Panc1 (cell line): ENCODE measurements at regions of chr1 and their contacts with region 1.

Region 1: GRCh38 chr1:84433258-84434080 is 35.2 kb downstream of the DNASE2B start:
- DNase-seq: peak; percentile 84
- ATAC-seq: peak; percentile 94
- H3K4me3 ChIP-seq: peak overlapping the region; percentile 7 to 37
- H3K27ac ChIP-seq: peak overlapping the region; percentile 5
- H3K4me1 ChIP-seq: peaks cover 12% of the 10 kb centered on the region
- H3K27me3 ChIP-seq: no peaks in the 10 kb centered on the region
- CTCF ChIP-seq: peak; percentile 92

Region 2: DNA sequence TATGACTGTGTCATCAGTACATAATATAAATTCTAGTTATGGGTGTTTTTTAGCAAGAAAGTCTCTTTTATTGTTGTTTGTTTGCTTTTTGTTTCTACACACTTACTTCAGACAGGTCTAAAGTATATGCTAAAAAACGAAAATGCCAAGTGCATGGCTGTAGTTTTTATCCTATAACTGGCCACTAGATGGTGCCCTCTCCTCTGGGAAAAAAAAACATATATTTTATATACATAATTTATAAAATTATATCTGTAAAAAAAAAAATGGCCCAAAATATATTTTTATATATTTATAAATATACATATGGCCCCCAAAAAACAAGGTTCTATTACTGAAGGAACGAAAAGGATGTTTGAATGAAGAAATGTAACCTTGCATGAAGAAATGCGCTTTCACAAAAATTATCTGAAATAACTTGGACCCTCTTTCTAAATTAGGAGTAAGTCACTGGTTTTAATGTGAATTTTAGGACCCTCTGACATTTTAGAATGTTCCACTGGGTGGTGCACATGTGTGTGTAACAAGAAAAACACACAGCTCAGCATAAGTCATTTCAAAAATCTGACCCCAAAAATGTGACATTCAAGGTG is 528.1 kb before region 1 on chr1:
- CTCF ChIA-PET with region 1: no interaction called
- POLR2A ChIA-PET with region 1: no interaction called
- in situ Hi-C with region 1: no loop called
- intact Hi-C with region 1: loop called (anchors 10 kb)
- DNase-seq: peak; percentile 43
- ATAC-seq: no peak
- H3K4me3 ChIP-seq: no peak overlapping the region
- H3K27ac ChIP-seq: no peak overlapping the region
- H3K4me1 ChIP-seq: no peaks in the 10 kb centered on the region
- H3K27me3 ChIP-seq: no peaks in the 10 kb centered on the region
- CTCF ChIP-seq: peak; percentile 81; the same call in 1 of the 2 replicates

Region 3: GRCh38 chr1:83931658-83932253 is 501.7 kb before region 1 on chr1:
- CTCF ChIA-PET with region 1: no interaction called
- POLR2A ChIA-PET with region 1: no interaction called
- in situ Hi-C with region 1: no loop called
- intact Hi-C with region 1: loop called (anchors 5 kb)
- DNase-seq: peak; percentile 56
- ATAC-seq: peak; percentile 93
- H3K4me3 ChIP-seq: no peak overlapping the region
- H3K27ac ChIP-seq: no peak overlapping the region
- H3K4me1 ChIP-seq: no peaks in the 10 kb centered on the region
- H3K27me3 ChIP-seq: no peaks in the 10 kb centered on the region
- CTCF ChIP-seq: peak; percentile 88; the same call in 1 of the 2 replicates

Region 4: DNA sequence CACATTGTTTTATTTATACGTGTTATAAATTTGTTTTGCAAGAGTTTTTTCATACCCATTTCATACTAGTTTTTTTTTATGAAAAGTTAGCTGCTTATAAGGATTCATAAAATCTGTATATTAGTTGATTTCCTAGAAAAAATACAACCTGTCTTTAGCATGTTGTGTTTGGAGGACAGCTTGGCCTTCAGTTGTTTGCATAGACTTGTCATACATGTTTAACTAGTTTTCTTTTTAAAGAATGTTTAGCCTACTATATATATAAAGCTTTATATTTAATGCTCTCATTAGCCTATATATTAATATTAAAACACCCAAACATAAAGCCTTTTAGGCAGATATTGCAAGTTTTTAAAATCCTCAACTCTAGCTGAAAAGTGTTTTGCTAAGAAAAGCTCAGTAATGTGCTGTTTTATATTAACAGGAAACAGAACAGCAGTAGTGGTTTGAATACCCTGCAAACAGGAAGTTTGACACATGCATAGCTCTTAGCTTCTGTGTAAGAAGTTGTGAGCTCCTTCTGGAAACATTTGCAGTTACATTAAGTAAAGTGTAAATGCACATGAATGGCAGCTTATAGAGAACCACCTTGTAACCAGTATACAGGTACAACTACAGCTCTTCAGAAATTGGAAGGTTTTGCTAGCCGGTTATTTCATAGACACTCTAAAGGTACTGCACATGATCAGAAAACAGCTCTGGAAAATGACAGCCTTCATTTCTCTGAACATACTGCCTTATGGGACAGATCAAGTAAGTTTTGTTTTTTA is 289.5 kb before region 1 on chr1 and contains the start of gene PRKACB:
- CTCF ChIA-PET with region 1: interaction called, 8 read pairs
- POLR2A ChIA-PET with region 1: interaction called, 8 read pairs
- in situ Hi-C with region 1: no loop called
- intact Hi-C with region 1: loop called (anchors 1 kb)
- DNase-seq: peak; percentile 51
- ATAC-seq: peak; percentile 76
- H3K4me3 ChIP-seq: no peak within 1 kb of the TSS
- H3K27ac ChIP-seq: peak within 1 kb of the TSS; percentile 23
- H3K4me1 ChIP-seq: peaks cover 22% of the 10 kb centered on the region
- H3K27me3 ChIP-seq: no peaks in the 10 kb centered on the region
- CTCF ChIP-seq: no peak
- total RNA-seq, gene PRKACB: 54.9 TPM

Region 5: GRCh38 chr1:84236256-84236655 is 197.2 kb before region 1 on chr1:
- CTCF ChIA-PET with region 1: no interaction called
- POLR2A ChIA-PET with region 1: no interaction called
- in situ Hi-C with region 1: no loop called
- intact Hi-C with region 1: no loop called
- DNase-seq: no peak
- ATAC-seq: no peak
- H3K4me3 ChIP-seq: no peak overlapping the region
- H3K27ac ChIP-seq: no peak overlapping the region
- H3K4me1 ChIP-seq: no peaks in the 10 kb centered on the region
- H3K27me3 ChIP-seq: no peaks in the 10 kb centered on the region
- CTCF ChIP-seq: no peak

Region 6: GRCh38 chr1:84301004-84301784 is 132.3 kb before region 1 on chr1 and contains the start of gene SAMD13:
- CTCF ChIA-PET with region 1: no interaction called
- POLR2A ChIA-PET with region 1: interaction called, 3 read pairs
- in situ Hi-C with region 1: no loop called
- intact Hi-C with region 1: loop called (anchors 5 kb)
- DNase-seq: peak; percentile 85
- ATAC-seq: no peak
- H3K4me3 ChIP-seq: peak within 1 kb of the TSS; percentile 37 to 67
- H3K27ac ChIP-seq: peak within 1 kb of the TSS; percentile 79
- H3K4me1 ChIP-seq: peaks cover 50% of the 10 kb centered on the region
- H3K27me3 ChIP-seq: no peaks in the 10 kb centered on the region
- CTCF ChIP-seq: no peak
- total RNA-seq, gene SAMD13: 2.2 TPM

Region 7: GRCh38 chr1:84753516-84754385 is 320.3 kb after region 1 on chr1:
- CTCF ChIA-PET with region 1: interaction called, 3 read pairs
- POLR2A ChIA-PET with region 1: no interaction called
- in situ Hi-C with region 1: no loop called
- intact Hi-C with region 1: loop called (anchors 10 kb)
- DNase-seq: peak; percentile 81
- ATAC-seq: peak; percentile 98
- H3K4me3 ChIP-seq: no peak overlapping the region
- H3K27ac ChIP-seq: no peak overlapping the region
- H3K4me1 ChIP-seq: no peaks in the 10 kb centered on the region; the same call in 1 of the 2 replicates
- H3K27me3 ChIP-seq: peaks cover 4% of the 10 kb centered on the region; the same call in 1 of the 2 replicates
- CTCF ChIP-seq: peak; percentile 100

Region 8: DNA sequence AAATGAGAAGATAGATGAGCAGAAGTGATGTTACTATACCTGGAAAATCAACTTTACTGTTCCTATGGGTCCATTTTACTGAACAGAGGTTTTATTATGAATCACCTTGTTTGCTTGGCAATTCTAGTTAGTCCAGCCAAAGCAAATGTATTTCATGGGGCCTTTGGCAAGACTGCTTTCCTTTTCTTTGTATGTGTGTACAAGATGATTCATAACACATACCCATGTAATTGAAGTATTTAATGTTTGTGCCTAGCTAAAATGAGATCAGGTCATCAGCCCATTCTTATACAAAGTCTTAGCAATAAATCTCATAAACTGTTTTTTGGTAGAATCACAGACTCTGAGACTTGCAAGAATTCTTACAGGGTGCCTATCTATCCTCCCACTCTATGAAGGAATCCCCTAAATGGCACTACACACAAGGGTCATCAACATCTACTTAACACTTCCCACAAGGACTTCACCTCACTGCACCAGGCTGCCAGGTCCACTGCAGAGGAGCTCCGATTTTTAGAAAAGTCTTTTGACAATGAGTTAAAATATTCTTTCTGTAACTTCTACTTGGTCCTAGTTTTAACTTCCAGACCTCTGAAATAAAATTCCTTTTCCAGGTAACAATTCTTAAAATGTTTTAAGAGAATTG is 401.1 kb after region 1 on chr1:
- CTCF ChIA-PET with region 1: no interaction called
- POLR2A ChIA-PET with region 1: no interaction called
- in situ Hi-C with region 1: no loop called
- intact Hi-C with region 1: no loop called
- DNase-seq: peak; percentile 88
- ATAC-seq: peak; percentile 90
- H3K4me3 ChIP-seq: no peak overlapping the region
- H3K27ac ChIP-seq: peak overlapping the region; percentile 48; the same call in 1 of the 2 replicates
- H3K4me1 ChIP-seq: peaks cover 32% of the 10 kb centered on the region
- H3K27me3 ChIP-seq: no peaks in the 10 kb centered on the region
- CTCF ChIP-seq: no peak

Region 9: DNA sequence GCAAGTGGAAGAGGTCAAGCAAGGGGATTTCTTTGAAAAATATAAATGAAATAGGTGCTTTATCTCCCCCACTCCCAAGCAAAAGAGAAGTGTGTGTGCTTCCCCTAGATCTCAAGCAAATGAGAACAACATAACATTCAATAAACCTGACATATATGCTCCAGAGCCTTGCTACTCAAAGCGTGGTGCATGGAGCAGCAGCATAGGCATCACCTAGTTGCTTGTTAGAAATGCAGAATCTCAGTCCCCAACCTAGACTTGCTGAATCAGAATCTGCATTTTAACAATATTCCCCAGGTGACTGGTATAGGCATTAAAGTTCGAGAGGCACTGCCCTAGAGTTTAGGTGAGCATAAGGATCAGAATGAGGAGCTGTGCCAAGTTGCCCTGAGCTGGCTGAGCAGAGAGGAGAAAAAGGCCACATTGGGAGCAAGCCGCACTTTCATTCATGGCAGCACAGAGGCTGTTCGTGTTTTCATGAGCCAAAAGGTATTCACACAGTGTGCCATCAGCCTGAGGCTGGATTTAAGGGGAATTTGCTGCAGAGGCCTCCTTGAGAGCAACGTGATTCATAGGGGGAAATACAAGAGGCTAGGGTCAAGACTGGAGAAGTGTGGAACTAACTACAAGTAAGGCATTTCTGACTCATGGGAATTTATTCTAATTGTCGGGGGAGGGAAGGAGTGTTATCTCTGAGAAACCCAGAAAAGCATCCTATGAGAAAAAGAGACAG is 473.8 kb after region 1 on chr1:
- CTCF ChIA-PET with region 1: interaction called, 12 read pairs
- POLR2A ChIA-PET with region 1: no interaction called
- in situ Hi-C with region 1: no loop called
- intact Hi-C with region 1: no loop called
- DNase-seq: no peak
- ATAC-seq: peak; percentile 77
- H3K4me3 ChIP-seq: no peak overlapping the region
- H3K27ac ChIP-seq: no peak overlapping the region
- H3K4me1 ChIP-seq: 0 out of 2 replicates have a peak, but pooled peaks cover 3% of the 10 kb centered on the region
- H3K27me3 ChIP-seq: peaks cover 19% of the 10 kb centered on the region
- CTCF ChIP-seq: no peak

Region 10: DNA sequence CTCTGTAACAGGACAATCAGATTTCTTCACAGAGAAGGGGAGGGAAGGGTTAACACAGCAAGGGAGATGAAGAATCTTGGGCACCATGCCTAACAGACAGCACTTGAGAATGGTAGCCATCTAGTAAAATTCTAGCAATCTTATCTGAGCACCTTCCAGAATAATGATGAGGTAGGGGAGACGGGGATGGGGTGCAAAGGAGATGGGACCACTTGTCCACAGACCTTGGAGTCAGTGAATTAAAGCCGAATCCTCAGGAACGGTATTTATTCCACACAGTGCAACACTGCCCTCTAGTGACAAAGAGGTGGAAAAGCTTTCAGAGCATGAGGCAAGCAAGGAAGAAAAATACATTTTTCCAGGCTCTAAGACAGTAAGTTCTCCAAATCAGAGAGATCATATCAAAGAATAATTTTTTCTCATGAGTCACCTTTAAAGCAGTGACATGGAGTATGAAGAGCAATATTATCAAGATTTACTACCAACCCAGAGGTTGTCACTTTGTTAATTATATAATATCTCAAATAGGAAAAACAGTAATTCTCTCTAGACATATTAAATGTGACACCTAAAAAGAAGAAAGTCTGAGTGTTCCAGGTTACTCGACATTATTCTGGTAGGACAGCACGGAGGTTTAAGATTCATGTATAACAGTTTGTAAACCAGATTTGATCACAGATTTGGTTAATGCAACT is 502.8 kb after region 1 on chr1:
- CTCF ChIA-PET with region 1: no interaction called
- POLR2A ChIA-PET with region 1: no interaction called
- in situ Hi-C with region 1: no loop called
- intact Hi-C with region 1: no loop called
- DNase-seq: peak; percentile 64
- ATAC-seq: peak; percentile 80
- H3K4me3 ChIP-seq: no peak overlapping the region
- H3K27ac ChIP-seq: no peak overlapping the region
- H3K4me1 ChIP-seq: no peaks in the 10 kb centered on the region
- H3K27me3 ChIP-seq: no peaks in the 10 kb centered on the region
- CTCF ChIP-seq: peak; percentile 99